Esophagus muscularis mucosa (tissue), 4 donors: ENCODE measurements at regions of chr3 and their contacts with region 1.

Region 1: DNA sequence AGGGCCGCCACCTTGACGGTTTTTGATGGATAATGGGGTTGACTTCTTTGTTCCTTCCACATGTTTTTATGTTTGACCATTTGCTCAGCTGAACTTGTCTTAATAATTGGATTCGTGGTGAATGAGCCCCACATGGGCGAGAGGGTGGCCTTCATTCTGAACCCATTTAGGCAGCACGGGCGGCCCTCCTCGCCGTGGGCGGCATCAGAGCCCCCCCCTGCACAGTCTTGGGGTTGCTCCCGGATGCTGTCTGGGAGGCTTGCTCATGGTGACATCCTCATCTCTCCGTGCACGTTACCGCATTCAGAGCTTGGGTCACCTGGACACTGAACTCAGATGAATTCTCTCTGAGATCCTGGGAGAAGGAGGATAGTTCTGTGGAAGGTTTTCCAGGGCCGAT is 172.3 kb upstream of the OSBPL11 start:
- DNase-seq: no peak
- H3K4me3 ChIP-seq: no peak overlapping the region
- H3K27ac ChIP-seq: no peak overlapping the region
- H3K4me1 ChIP-seq: peaks cover 3 to 16% (median 7%) of the 10 kb centered on the region in 4 donors
- H3K27me3 ChIP-seq: peaks cover 0 to 18% (median 0%) of the 10 kb centered on the region in 4 donors
- CTCF ChIP-seq: no peak
- EP300 ChIP-seq: no peak
- POLR2A ChIP-seq: no peak

Region 2: GRCh38 chr3:125357032-125357658 is 410.5 kb before region 1 on chr3:
- intact Hi-C with region 1: no loop called
- DNase-seq: no peak
- H3K4me3 ChIP-seq: peak overlapping the region; percentile 62 to 76 (median 63)
- H3K27ac ChIP-seq: peak overlapping the region; percentile 73 to 79 (median 78)
- H3K4me1 ChIP-seq: peaks cover 12 to 58% (median 43%) of the 10 kb centered on the region in 4 donors
- H3K27me3 ChIP-seq: no peaks in the 10 kb centered on the region
- CTCF ChIP-seq: no peak
- EP300 ChIP-seq: no peak
- POLR2A ChIP-seq: no peak

Region 3: DNA sequence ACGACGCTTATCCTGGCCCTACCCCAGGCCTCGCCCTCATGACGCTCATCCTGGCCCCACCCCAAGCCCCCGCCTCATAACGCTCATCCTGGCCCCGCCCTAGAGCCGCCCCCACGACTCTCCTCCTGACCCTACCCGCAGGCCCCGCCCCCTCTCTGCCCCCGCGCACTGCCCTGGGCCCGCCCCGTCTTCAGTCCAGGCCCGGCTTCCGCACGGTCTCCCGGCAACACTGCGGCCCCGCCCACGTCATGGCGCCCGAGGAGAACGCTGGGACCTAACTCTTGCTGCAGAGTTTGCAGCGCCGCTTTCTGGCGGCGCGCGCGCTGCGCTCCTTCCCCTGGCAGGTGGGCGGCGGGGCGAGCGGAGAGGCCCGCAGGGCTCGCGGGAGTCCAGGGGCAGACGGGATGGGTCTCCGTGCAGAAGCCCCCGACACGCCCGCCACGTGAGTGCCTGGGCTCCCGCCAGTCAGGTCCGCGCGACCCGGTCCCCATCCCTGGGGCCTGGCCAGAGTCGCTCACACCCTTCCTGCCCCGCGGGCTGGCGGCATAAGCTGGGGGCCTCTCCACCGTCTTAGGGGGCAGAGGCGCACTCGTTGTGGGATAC is 148.8 kb after region 1 on chr3:
- intact Hi-C with region 1: loop called (anchors 10 kb)
- DNase-seq: peak; percentile 100
- H3K4me3 ChIP-seq: peak overlapping the region; percentile 70 to 92 (median 76)
- H3K27ac ChIP-seq: peak overlapping the region; percentile 79 to 93 (median 90)
- H3K4me1 ChIP-seq: peaks cover 5 to 18% (median 16%) of the 10 kb centered on the region in 4 donors
- H3K27me3 ChIP-seq: no peaks in the 10 kb centered on the region
- CTCF ChIP-seq: peak; percentile 21 to 36 (median 35)
- EP300 ChIP-seq: no peak
- POLR2A ChIP-seq: no peak